HepG2 (cell line): ENCODE measurements at regions of chr2 and their contacts with region 1.

Region 1: DNA sequence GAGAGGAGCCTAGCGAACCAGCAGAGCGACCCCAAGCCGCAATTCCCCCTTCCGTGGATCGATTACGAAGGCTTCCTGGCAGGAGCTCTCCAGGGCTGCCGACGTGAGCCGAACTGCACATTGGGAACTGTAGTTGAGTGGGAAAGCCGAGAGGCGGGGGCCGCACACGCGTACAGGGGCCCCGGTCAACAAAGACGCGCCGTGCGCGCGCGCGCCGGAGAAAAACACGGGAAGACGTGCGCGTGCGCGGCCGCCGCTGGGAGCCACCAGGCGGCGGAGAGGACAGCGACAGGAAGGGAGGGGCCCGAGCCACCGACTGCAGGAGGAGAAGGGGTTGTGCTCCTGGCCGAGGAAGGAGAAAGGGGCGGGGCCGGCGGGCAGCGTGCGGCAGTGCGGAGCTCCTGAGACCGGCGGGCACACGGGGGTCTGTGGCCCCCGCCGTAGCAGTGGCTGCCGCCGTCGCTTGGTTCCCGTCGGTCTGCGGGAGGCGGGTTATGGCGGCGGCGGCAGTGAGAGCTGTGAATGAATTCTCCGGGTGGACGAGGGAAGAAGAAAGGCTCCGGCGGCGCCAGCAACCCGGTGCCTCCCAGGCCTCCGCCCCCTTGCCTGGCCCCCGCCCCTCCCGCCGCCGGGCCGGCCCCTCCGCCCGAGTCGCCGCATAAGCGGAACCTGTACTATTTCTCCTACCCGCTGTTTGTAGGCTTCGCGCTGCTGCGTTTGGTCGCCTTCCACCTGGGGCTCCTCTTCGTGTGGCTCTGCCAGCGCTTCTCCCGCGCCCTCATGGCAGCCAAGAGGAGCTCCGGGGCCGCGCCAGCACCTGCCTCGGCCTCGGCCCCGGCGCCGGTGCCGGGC is at the start of gene SPAST:
- DNase-seq: peak; percentile 98
- ATAC-seq: peak; percentile 92
- H3K4me3 ChIP-seq: peak within 1 kb of the TSS; percentile 75 to 95 (median 87)
- H3K27ac ChIP-seq: peak within 1 kb of the TSS; percentile 95
- H3K4me1 ChIP-seq: peaks cover 31% of the 10 kb centered on the region
- H3K27me3 ChIP-seq: no peaks in the 10 kb centered on the region; a peak in 1 of 5 replicates
- CTCF ChIP-seq: peak; percentile 65
- EP300 ChIP-seq: peak in 1 of 2 experiments; percentile 42; a peak in 2 of 4 replicates
- POLR2A ChIP-seq: peak; percentile 91
- RAD21 ChIP-seq: no peak; the same call in none of the 2 replicates
- total RNA-seq, gene SPAST: 40.4 and 41.5 TPM in 2 replicates

Region 2: GRCh38 chr2:31922542-31923408 is 140.8 kb before region 1 on chr2:
- CTCF ChIA-PET with region 1: no interaction called
- POLR2A ChIA-PET with region 1: no interaction called
- in situ Hi-C with region 1: no loop called
- intact Hi-C with region 1: loop called (anchors 10 kb)
- DNase-seq: no peak
- ATAC-seq: no peak
- H3K4me3 ChIP-seq: no peak overlapping the region
- H3K27ac ChIP-seq: no peak overlapping the region
- H3K4me1 ChIP-seq: peaks cover 26% of the 10 kb centered on the region
- H3K27me3 ChIP-seq: no peaks in the 10 kb centered on the region
- CTCF ChIP-seq: no peak
- EP300 ChIP-seq: no peak
- POLR2A ChIP-seq: no peak
- RAD21 ChIP-seq: no peak

Region 3: DNA sequence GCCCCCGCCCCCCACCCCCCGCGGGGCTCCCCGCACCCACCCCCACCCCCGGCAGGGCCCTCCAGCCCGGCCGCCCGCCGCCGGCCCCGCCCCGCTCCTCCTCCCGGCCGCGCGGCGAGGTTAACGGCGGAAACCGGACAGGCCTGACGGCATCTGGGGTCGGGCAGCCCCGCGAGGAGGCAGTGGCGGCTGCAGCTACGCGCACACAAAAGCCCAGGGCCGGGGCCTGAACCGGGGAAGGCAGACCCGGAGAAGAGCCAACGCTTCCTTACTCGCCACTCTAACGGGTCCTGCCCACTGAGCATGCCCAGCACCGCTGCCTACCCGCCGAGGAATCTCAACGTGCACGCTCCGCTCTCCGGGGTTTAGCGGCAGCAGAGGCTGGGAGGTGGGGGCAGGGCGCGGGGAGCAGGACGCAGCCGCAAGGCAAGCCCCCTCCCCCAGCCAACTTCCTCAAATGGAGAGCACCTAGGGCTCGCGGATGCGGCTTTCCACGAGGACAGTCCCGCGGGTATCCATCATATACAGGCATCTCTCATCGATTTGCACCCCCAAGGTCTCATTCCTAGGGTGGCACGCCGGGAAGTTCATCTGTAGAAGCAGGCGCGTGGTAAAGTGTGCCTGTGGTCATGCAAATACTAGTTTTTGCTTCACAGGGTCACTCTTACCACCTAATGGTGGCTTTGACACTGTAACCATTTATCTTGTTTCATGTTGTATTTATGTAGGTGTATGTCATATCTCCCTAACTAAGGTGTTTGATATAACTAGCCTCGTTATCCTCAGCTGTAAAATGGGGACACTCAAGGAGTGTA is 52.7 kb before region 1 on chr2 and contains the start of gene MEMO1:
- CTCF ChIA-PET with region 1: no interaction called
- POLR2A ChIA-PET with region 1: interaction called, 22 read pairs
- in situ Hi-C with region 1: no loop called
- intact Hi-C with region 1: loop called (anchors 2 kb)
- DNase-seq: peak; percentile 91
- ATAC-seq: peak; percentile 79
- H3K4me3 ChIP-seq: peak within 1 kb of the TSS; percentile 87 to 99 (median 95)
- H3K27ac ChIP-seq: peak within 1 kb of the TSS; percentile 93
- H3K4me1 ChIP-seq: peaks cover 41% of the 10 kb centered on the region
- H3K27me3 ChIP-seq: no peaks in the 10 kb centered on the region; a peak in 1 of 5 replicates
- CTCF ChIP-seq: peak; percentile 48
- EP300 ChIP-seq: peak; percentile 55 to 65
- POLR2A ChIP-seq: peak; percentile 84 to 85
- RAD21 ChIP-seq: peak; percentile 83
- total RNA-seq, gene MEMO1: 68.0 and 69.8 TPM in 2 replicates

Region 4: GRCh38 chr2:32039447-32040219 is 23.9 kb before region 1 on chr2 and contains the start of gene DPY30:
- CTCF ChIA-PET with region 1: no interaction called
- POLR2A ChIA-PET with region 1: interaction called, 146 read pairs
- in situ Hi-C with region 1: no loop called
- intact Hi-C with region 1: loop called (anchors 1 kb)
- DNase-seq: peak; percentile 91
- ATAC-seq: peak; percentile 95
- H3K4me3 ChIP-seq: peak within 1 kb of the TSS; percentile 72 to 96 (median 84)
- H3K27ac ChIP-seq: peak within 1 kb of the TSS; percentile 65
- H3K4me1 ChIP-seq: peaks cover 21% of the 10 kb centered on the region
- H3K27me3 ChIP-seq: no peaks in the 10 kb centered on the region; a peak in 1 of 5 replicates
- CTCF ChIP-seq: peak; percentile 60
- EP300 ChIP-seq: 0 out of 4 replicates have a peak, but pooled peaks of 1 of the 2 experiments have one; percentile 21
- POLR2A ChIP-seq: peak; percentile 98 to 100
- RAD21 ChIP-seq: peak; percentile 47
- total RNA-seq, gene DPY30: 118 and 165 TPM in 2 replicates

Region 5: DNA sequence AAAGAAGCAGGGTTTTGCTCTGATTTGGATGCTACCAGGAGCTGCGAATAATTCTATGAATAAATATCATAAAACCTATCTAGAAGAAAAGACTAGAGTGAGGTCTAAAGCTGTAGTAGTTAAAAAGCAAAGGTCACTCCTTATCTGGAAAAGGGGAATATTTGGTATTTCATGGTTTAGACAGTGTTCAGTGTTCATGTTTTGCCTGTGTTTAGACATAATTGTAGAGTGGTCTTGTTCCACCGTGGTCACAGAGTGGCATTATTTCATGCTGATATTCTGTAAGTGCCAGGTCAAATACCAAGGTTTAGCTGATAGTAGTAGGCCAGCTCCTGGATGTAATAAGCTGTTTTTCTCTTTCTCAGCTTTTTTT is 10.6 kb after region 1 on chr2:
- CTCF ChIA-PET with region 1: no interaction called
- POLR2A ChIA-PET with region 1: interaction called, 28 read pairs
- in situ Hi-C with region 1: no loop called
- intact Hi-C with region 1: no loop called
- DNase-seq: peak; percentile 30
- ATAC-seq: peak; percentile 79
- H3K4me3 ChIP-seq: no peak overlapping the region
- H3K27ac ChIP-seq: peak overlapping the region; percentile 22
- H3K4me1 ChIP-seq: peaks cover 21% of the 10 kb centered on the region
- H3K27me3 ChIP-seq: no peaks in the 10 kb centered on the region
- CTCF ChIP-seq: no peak
- EP300 ChIP-seq: no peak
- POLR2A ChIP-seq: no peak
- RAD21 ChIP-seq: no peak

Region 6: GRCh38 chr2:32330136-32330535 is 266.6 kb after region 1 on chr2:
- CTCF ChIA-PET with region 1: no interaction called
- POLR2A ChIA-PET with region 1: interaction called, 4 read pairs
- in situ Hi-C with region 1: no loop called
- intact Hi-C with region 1: loop called (anchors 5 kb)
- DNase-seq: no peak
- ATAC-seq: no peak
- H3K4me3 ChIP-seq: peak overlapping the region in 1 of 3 experiments; percentile 60; a peak in 2 of 6 replicates
- H3K27ac ChIP-seq: peak overlapping the region; percentile 93
- H3K4me1 ChIP-seq: peaks cover 49% of the 10 kb centered on the region
- H3K27me3 ChIP-seq: no peaks in the 10 kb centered on the region
- CTCF ChIP-seq: no peak
- EP300 ChIP-seq: no peak
- POLR2A ChIP-seq: no peak
- RAD21 ChIP-seq: no peak